Activated T-helper 1 cell treated with anti-CD3 and anti-CD28 coated beads, Interleukin-12 subunit alpha, Interleukin-12 subunit beta, Interleukin-2, Interleukin-4 antibody, amounts not matched to agents 30 ng/mL and 10 ng/mL and 1 ng/mL, durations not matched to agents 14 hours and 24 hours and 36 hours (primary cell): ENCODE measurements at regions of chr15 and their contacts with region 1.

Region 1: GRCh38 chr15:87850916-87851315 is 405.6 kb downstream of the NTRK3 start:
- DNase-seq: no peak
- H3K4me3 Mint-ChIP-seq: no peak overlapping the region
- H3K27ac Mint-ChIP-seq: no peak overlapping the region
- H3K4me1 Mint-ChIP-seq: no peaks in the 10 kb centered on the region
- H3K27me3 Mint-ChIP-seq: peaks cover 1% of the 10 kb centered on the region

Region 2: DNA sequence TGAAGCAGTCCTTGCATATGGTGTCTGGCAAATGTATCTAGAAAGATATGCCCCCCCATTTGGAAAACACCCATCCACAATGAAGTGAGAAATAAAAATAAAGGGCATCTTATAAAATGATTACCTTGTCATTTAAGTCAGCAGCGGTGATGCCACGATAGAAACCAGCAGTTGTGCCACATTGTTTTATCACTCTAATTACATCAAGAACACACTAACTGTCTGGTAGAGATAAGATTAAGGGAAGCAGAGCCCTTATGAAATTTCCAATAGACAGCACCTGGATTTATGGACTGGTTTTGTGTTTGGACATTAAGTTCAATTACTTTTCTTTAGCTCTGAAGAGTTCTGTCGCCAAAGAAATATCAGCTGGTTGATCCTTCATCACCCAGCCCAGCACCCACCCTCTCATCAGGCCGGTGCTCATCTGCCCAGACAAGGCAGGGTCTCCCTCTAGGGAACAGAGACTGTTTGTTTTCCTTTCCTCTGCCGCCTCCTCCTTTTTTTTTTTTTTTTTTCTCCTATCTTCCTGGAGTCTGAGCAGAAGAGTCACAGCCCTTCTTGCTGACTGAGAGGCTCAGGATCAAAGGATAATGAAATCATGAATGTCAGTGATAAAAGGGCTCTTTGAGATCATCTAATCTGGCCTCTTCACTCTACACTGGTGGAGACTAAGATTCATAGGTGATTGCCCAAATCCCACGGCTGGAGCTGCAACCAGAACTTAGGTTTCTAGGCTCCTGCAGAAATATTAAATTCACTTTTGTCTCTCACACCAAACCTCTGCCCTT is 58.5 kb before region 1 on chr15:
- intact Hi-C with region 1: loop called (anchors 10 kb)
- DNase-seq: no peak
- H3K4me3 Mint-ChIP-seq: no peak overlapping the region
- H3K27ac Mint-ChIP-seq: no peak overlapping the region
- H3K4me1 Mint-ChIP-seq: no peaks in the 10 kb centered on the region
- H3K27me3 Mint-ChIP-seq: no peaks in the 10 kb centered on the region